Activated CD4-positive, alpha-beta memory T cell treated with anti-CD3 and anti-CD28 coated beads for 36 hours (primary cell): ENCODE measurements at regions of chr5 and their contacts with region 1.

Region 1: DNA sequence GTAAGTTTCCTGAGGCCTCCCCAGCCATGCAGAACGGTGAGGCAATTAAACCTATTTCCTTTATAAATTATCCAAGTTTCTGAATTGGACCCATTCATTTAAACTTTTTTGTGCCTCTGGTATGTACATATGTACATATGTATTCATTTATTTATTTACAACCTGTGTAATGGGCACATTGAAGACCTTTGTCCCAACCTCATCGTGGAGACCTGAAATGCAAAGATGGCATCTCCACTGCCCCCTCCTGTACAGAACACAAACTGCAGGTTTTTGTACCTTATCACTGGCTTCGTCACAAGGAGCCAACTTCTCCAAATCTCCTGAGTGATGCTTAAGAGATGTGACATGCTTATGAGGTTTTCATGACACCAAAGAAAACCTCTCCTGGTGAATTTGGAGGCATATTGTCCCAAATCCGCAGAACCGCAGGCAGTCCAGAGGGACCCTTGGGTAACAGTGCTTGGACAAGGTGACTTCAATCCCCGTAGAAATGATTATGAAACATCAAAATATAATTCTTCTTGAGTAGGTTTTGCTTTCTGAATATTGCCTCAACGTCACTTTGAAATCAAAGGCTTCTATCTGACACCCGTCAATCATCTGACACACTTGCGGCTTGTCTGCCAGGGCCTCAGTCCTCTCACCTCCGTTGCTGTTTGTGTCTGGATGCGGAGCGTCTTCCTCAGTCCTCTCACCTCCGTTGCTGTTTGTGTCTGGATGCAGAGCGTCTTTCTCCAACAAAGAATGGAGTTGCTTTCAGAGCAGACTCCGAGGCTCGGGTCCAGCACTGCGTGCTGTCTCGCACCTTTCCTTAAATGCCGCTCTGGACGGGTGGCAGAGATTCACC is 135.0 kb upstream of the IRX4 start:
- DNase-seq: peak; percentile 40
- H3K4me3 Mint-ChIP-seq: no peak overlapping the region
- H3K27ac Mint-ChIP-seq: no peak overlapping the region
- H3K4me1 Mint-ChIP-seq: no peaks in the 10 kb centered on the region
- H3K27me3 Mint-ChIP-seq: peaks cover 16% of the 10 kb centered on the region

Region 2: GRCh38 chr5:1666812-1667588 is 350.8 kb before region 1 on chr5:
- CTCF ChIA-PET with region 1: no interaction called
- POLR2A ChIA-PET with region 1: no interaction called
- intact Hi-C with region 1: loop called (anchors 5 kb)
- DNase-seq: peak; percentile 63
- H3K4me3 Mint-ChIP-seq: no peak overlapping the region
- H3K27ac Mint-ChIP-seq: no peak overlapping the region
- H3K4me1 Mint-ChIP-seq: peaks cover 9% of the 10 kb centered on the region
- H3K27me3 Mint-ChIP-seq: peaks cover 68% of the 10 kb centered on the region

Region 3: GRCh38 chr5:1737790-1738405 is 279.9 kb before region 1 on chr5:
- CTCF ChIA-PET with region 1: no interaction called
- POLR2A ChIA-PET with region 1: no interaction called
- intact Hi-C with region 1: loop called (anchors 1 kb)
- DNase-seq: peak; percentile 58
- H3K4me3 Mint-ChIP-seq: no peak overlapping the region
- H3K27ac Mint-ChIP-seq: no peak overlapping the region
- H3K4me1 Mint-ChIP-seq: no peaks in the 10 kb centered on the region
- H3K27me3 Mint-ChIP-seq: peaks cover 22% of the 10 kb centered on the region

Region 4: GRCh38 chr5:1763548-1763911 is 254.2 kb before region 1 on chr5:
- CTCF ChIA-PET with region 1: interaction called, 5 read pairs
- POLR2A ChIA-PET with region 1: no interaction called
- intact Hi-C with region 1: loop called (anchors 1 kb)
- DNase-seq: peak; percentile 57
- H3K4me3 Mint-ChIP-seq: no peak overlapping the region
- H3K27ac Mint-ChIP-seq: no peak overlapping the region
- H3K4me1 Mint-ChIP-seq: no peaks in the 10 kb centered on the region
- H3K27me3 Mint-ChIP-seq: peaks cover 11% of the 10 kb centered on the region